Naive thymus-derived CD4-positive, alpha-beta T cell (primary cell): ENCODE measurements at regions of chr4 and their contacts with region 1.

Region 1: GRCh38 chr4:81505004-81505598 is 33.4 kb upstream of the RASGEF1B start:
- DNase-seq: peak; percentile 28 to 79 (median 69)
- ATAC-seq: peak; percentile 86
- H3K4me3 ChIP-seq: peak overlapping the region; percentile 10
- H3K4me3 Mint-ChIP-seq: peak overlapping the region; percentile 7 to 81 (median 68)
- H3K27ac ChIP-seq: peak overlapping the region; percentile 48
- H3K27ac Mint-ChIP-seq: peak overlapping the region; percentile 58 to 96 (median 93)
- H3K4me1 ChIP-seq: peaks cover 10 to 14% of the 10 kb centered on the region in 2 donors
- H3K4me1 Mint-ChIP-seq: peaks cover 22 to 56% (median 31%) of the 10 kb centered on the region in 7 donors
- H3K27me3 ChIP-seq: no peaks in the 10 kb centered on the region
- H3K27me3 Mint-ChIP-seq: peaks cover 0 to 2% (median 0%) of the 10 kb centered on the region in 5 donors

Region 2: GRCh38 chr4:80423553-80424224 is 1081.4 kb before region 1 on chr4:
- CTCF ChIA-PET with region 1: no interaction called
- POLR2A ChIA-PET with region 1: no interaction called
- intact Hi-C with region 1: no loop called
- DNase-seq: no peak
- ATAC-seq: no peak
- H3K4me3 ChIP-seq: no peak overlapping the region
- H3K4me3 Mint-ChIP-seq: peak overlapping the region in 2 of 10 donors; percentile 6 to 13
- H3K27ac ChIP-seq: no peak overlapping the region
- H3K27ac Mint-ChIP-seq: peak overlapping the region in 5 of 9 donors; percentile 1 to 56 (median 19)
- H3K4me1 ChIP-seq: peaks cover 0 to 13% of the 10 kb centered on the region in 2 donors
- H3K4me1 Mint-ChIP-seq: peaks cover 2 to 28% (median 16%) of the 10 kb centered on the region in 7 donors
- H3K27me3 ChIP-seq: no peaks in the 10 kb centered on the region
- H3K27me3 Mint-ChIP-seq: peaks cover 0 to under 1% (median 0%) of the 10 kb centered on the region in 5 donors

Region 3: GRCh38 chr4:81562093-81562492 is 57.0 kb after region 1 on chr4:
- CTCF ChIA-PET with region 1: interaction called, 4 read pairs
- POLR2A ChIA-PET with region 1: no interaction called
- intact Hi-C with region 1: loop called (anchors 5 kb)
- DNase-seq: peak in 7 of 9 donors; percentile 28 to 50 (median 40)
- ATAC-seq: peak; percentile 94
- H3K4me3 ChIP-seq: no peak overlapping the region
- H3K4me3 Mint-ChIP-seq: peak overlapping the region in 7 of 10 donors; percentile 27 to 64 (median 55)
- H3K27ac ChIP-seq: peak overlapping the region; percentile 42
- H3K27ac Mint-ChIP-seq: peak overlapping the region; percentile 5 to 86 (median 77)
- H3K4me1 ChIP-seq: peaks cover 0 to 5% of the 10 kb centered on the region in 2 donors
- H3K4me1 Mint-ChIP-seq: peaks cover 7 to 14% (median 13%) of the 10 kb centered on the region in 7 donors
- H3K27me3 ChIP-seq: no peaks in the 10 kb centered on the region
- H3K27me3 Mint-ChIP-seq: no peaks in the 10 kb centered on the region

Region 4: DNA sequence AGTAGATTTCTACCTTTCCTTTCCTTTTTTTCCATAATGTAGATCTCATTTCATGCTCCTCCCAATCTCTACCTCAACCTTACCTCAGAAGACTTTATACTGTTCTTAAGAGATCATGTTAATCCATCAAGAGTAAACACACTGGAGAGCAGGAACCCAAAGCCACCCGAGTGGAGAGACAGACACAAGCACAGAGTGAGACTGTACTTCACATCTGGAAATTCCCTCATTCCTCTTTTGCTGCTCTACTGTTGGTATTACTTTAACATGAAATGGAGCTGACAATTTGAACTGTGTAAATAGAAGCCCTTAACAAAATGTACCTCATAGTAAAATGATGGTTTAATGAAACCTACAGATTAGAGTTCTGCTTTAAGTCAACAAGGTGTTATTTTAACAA is 72.3 kb after region 1 on chr4:
- CTCF ChIA-PET with region 1: no interaction called
- POLR2A ChIA-PET with region 1: no interaction called
- intact Hi-C with region 1: loop called in 1 of 2 experiments (anchors 2 kb)
- DNase-seq: no peak
- ATAC-seq: no peak
- H3K4me3 ChIP-seq: no peak overlapping the region
- H3K4me3 Mint-ChIP-seq: no peak overlapping the region
- H3K27ac ChIP-seq: no peak overlapping the region
- H3K27ac Mint-ChIP-seq: no peak overlapping the region
- H3K4me1 ChIP-seq: no peaks in the 10 kb centered on the region
- H3K4me1 Mint-ChIP-seq: peaks cover 0 to 2% (median 0%) of the 10 kb centered on the region in 7 donors
- H3K27me3 ChIP-seq: no peaks in the 10 kb centered on the region
- H3K27me3 Mint-ChIP-seq: peaks cover 0 to 3% (median 0%) of the 10 kb centered on the region in 5 donors